Endothelial cell of umbilical vein (primary cell): ENCODE measurements at regions of chr15 and their contacts with region 1.

Region 1: GRCh38 chr15:74768771-74769342 is 13.0 kb upstream of the CSK start:
- DNase-seq: peak; percentile 58
- H3K4me3 ChIP-seq: no peak overlapping the region
- H3K27ac ChIP-seq: no peak overlapping the region
- H3K4me1 ChIP-seq: peaks cover 2% of the 10 kb centered on the region
- H3K27me3 ChIP-seq: peaks cover 0 to 2% of the 10 kb centered on the region in 2 experiments
- CTCF ChIP-seq: peak; percentile 71 to 72
- POLR2A ChIP-seq: no peak

Region 2: GRCh38 chr15:74615508-74616365 is 153.1 kb before region 1 on chr15 and contains the start of gene CLK3:
- CTCF ChIA-PET with region 1: interaction called, 24 read pairs
- POLR2A ChIA-PET with region 1: no interaction called
- dilution Hi-C with region 1: no loop called
- intact Hi-C with region 1: no loop called
- DNase-seq: peak; percentile 89
- H3K4me3 ChIP-seq: peak within 1 kb of the TSS; percentile 91 to 93 (median 93)
- H3K27ac ChIP-seq: peak within 1 kb of the TSS; percentile 88
- H3K4me1 ChIP-seq: peaks cover 9% of the 10 kb centered on the region
- H3K27me3 ChIP-seq: no peaks in the 10 kb centered on the region
- CTCF ChIP-seq: no peak
- POLR2A ChIP-seq: peak; percentile 77
- total RNA-seq, gene CLK3: 69.2 and 75.5 TPM in 2 replicates

Region 3: GRCh38 chr15:74653426-74654123 is 115.3 kb before region 1 on chr15:
- CTCF ChIA-PET with region 1: interaction called, 19 read pairs
- POLR2A ChIA-PET with region 1: no interaction called
- dilution Hi-C with region 1: loop called (anchors 25 kb)
- intact Hi-C with region 1: no loop called
- DNase-seq: peak; percentile 61
- H3K4me3 ChIP-seq: no peak overlapping the region
- H3K27ac ChIP-seq: peak overlapping the region; percentile 53
- H3K4me1 ChIP-seq: peaks cover 40% of the 10 kb centered on the region
- H3K27me3 ChIP-seq: no peaks in the 10 kb centered on the region
- CTCF ChIP-seq: no peak
- POLR2A ChIP-seq: no peak

Region 4: GRCh38 chr15:74754593-74755215 is 14.2 kb before region 1 on chr15:
- CTCF ChIA-PET with region 1: interaction called, 31 read pairs
- POLR2A ChIA-PET with region 1: no interaction called
- dilution Hi-C with region 1: no loop called
- intact Hi-C with region 1: no loop called
- DNase-seq: no peak
- H3K4me3 ChIP-seq: no peak overlapping the region
- H3K27ac ChIP-seq: no peak overlapping the region
- H3K4me1 ChIP-seq: no peaks in the 10 kb centered on the region
- H3K27me3 ChIP-seq: peaks cover 0 to 1% of the 10 kb centered on the region in 2 experiments
- CTCF ChIP-seq: no peak
- POLR2A ChIP-seq: no peak

Region 5: GRCh38 chr15:74799856-74800547 is 31.1 kb after region 1 on chr15:
- CTCF ChIA-PET with region 1: interaction called, 69 read pairs
- POLR2A ChIA-PET with region 1: no interaction called
- dilution Hi-C with region 1: no loop called
- intact Hi-C with region 1: loop called (anchors 1 kb)
- DNase-seq: peak; percentile 52
- H3K4me3 ChIP-seq: no peak overlapping the region
- H3K27ac ChIP-seq: no peak overlapping the region
- H3K4me1 ChIP-seq: no peaks in the 10 kb centered on the region
- H3K27me3 ChIP-seq: no peaks in the 10 kb centered on the region
- CTCF ChIP-seq: peak; percentile 93 to 98
- POLR2A ChIP-seq: no peak

Region 6: GRCh38 chr15:74906446-74907162 is 137.7 kb after region 1 on chr15 and contains the start of gene FAM219B:
- CTCF ChIA-PET with region 1: interaction called, 74 read pairs
- POLR2A ChIA-PET with region 1: no interaction called
- dilution Hi-C with region 1: no loop called
- intact Hi-C with region 1: loop called (anchors 1 kb)
- DNase-seq: peak; percentile 87
- H3K4me3 ChIP-seq: peak within 1 kb of the TSS; percentile 38 to 79 (median 73)
- H3K27ac ChIP-seq: peak within 1 kb of the TSS; percentile 32
- H3K4me1 ChIP-seq: peaks cover 11% of the 10 kb centered on the region
- H3K27me3 ChIP-seq: no peaks in the 10 kb centered on the region
- CTCF ChIP-seq: no peak
- POLR2A ChIP-seq: peak; percentile 98
- total RNA-seq, gene FAM219B: 57.0 and 73.0 TPM in 2 replicates

Region 7: DNA sequence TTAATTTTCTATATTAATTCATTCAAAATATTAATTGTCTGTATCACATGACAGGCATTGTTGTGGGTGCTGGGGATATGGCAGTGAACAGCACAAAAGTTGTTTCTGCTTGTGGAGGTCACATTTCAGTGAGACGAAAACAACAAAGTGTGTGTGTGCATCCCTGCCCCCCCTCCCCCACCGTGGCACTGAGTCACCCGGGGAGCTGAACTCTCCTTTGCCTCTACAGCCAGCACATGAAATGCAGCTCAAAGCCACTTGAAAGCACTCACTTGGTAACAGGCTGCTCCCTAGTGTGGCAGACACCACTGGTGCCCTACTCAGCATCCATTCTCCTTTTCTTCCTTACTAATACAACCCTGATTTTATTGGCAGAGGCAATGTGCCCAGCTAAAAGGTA is 209.6 kb after region 1 on chr15:
- CTCF ChIA-PET with region 1: no interaction called
- POLR2A ChIA-PET with region 1: no interaction called
- dilution Hi-C with region 1: no loop called
- intact Hi-C with region 1: no loop called
- DNase-seq: no peak
- H3K4me3 ChIP-seq: no peak overlapping the region
- H3K27ac ChIP-seq: no peak overlapping the region
- H3K4me1 ChIP-seq: no peaks in the 10 kb centered on the region
- H3K27me3 ChIP-seq: no peaks in the 10 kb centered on the region
- CTCF ChIP-seq: no peak
- POLR2A ChIP-seq: no peak